ENCODE measurements at regions of chr5 and their contacts with region 1.

Region 1: GRCh38 chr5:79702606-79703382 is 13.2 kb downstream of the CMYA5 start:
- DNase-seq: peak; percentile 54
- ATAC-seq: peak; percentile 60
- H3K4me3 Mint-ChIP-seq: no peak overlapping the region
- H3K27ac Mint-ChIP-seq: no peak overlapping the region
- H3K4me1 Mint-ChIP-seq: peaks cover 12% of the 10 kb centered on the region
- H3K27me3 Mint-ChIP-seq: no peaks in the 10 kb centered on the region
- CTCF ChIP-seq: peak; percentile 76

Region 2: GRCh38 chr5:79602889-79603288 is 99.9 kb before region 1 on chr5:
- CTCF ChIA-PET with region 1: no interaction called
- POLR2A ChIA-PET with region 1: no interaction called
- intact Hi-C with region 1: no loop called
- DNase-seq: no peak
- ATAC-seq: no peak
- H3K4me3 Mint-ChIP-seq: no peak overlapping the region
- H3K27ac Mint-ChIP-seq: no peak overlapping the region
- H3K4me1 Mint-ChIP-seq: no peaks in the 10 kb centered on the region
- H3K27me3 Mint-ChIP-seq: peaks cover 13% of the 10 kb centered on the region
- CTCF ChIP-seq: no peak

Region 3: GRCh38 chr5:79666758-79667157 is 36.0 kb before region 1 on chr5:
- CTCF ChIA-PET with region 1: no interaction called
- POLR2A ChIA-PET with region 1: no interaction called
- intact Hi-C with region 1: no loop called
- DNase-seq: no peak
- ATAC-seq: no peak
- H3K4me3 Mint-ChIP-seq: no peak overlapping the region
- H3K27ac Mint-ChIP-seq: peak overlapping the region; percentile 13
- H3K4me1 Mint-ChIP-seq: peaks cover 15% of the 10 kb centered on the region
- H3K27me3 Mint-ChIP-seq: no peaks in the 10 kb centered on the region
- CTCF ChIP-seq: no peak

Region 4: DNA sequence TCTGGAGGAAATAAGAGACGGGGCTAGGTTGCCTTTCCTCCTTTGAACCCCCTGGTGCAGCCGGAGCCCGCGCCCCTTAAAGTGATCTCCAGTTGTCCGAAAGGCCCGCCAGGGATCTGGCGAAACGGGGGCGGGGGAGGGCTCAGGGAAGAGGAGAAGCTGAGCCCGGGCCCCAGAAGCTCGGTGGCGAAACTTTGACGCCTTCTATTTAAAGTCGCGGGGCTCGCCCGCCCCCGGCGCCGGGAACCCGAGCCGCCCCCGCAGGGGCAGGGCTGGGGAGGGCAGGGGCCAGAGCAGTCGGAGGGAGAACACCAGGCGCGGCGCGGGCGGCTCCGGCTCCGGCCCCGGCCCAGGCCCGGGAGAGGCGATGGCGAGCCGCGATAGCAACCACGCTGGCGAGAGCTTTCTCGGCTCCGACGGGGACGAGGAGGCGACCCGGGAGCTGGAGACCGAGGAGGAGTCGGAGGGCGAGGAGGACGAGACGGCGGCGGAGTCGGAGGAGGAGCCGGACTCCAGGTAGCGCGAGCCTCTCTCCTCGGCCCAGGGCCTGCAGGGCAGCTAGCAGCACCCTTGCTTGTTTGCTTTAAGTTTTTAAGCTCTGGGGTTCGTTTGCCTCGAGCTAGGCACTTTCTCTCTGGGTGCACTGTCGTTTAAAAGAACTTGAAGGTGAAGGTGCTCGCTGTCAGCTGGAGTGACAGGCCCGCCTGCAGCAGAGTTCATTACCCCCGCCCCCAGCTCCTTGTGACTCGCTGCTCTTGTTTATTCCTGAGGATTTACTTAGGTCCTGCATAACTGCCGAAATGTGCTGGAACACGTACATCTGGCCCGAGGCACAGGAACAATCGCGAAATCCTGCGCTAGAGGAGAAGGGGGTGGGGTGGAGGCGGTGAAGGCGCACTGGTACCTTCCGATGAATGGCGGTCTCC is 13.0 kb before region 1 on chr5 and contains the start of gene CMYA5:
- CTCF ChIA-PET with region 1: interaction called, 14 read pairs
- POLR2A ChIA-PET with region 1: no interaction called
- intact Hi-C with region 1: no loop called
- DNase-seq: no peak
- ATAC-seq: no peak
- H3K4me3 Mint-ChIP-seq: no peak within 1 kb of the TSS
- H3K27ac Mint-ChIP-seq: no peak within 1 kb of the TSS
- H3K4me1 Mint-ChIP-seq: peaks cover 11% of the 10 kb centered on the region
- H3K27me3 Mint-ChIP-seq: no peaks in the 10 kb centered on the region
- CTCF ChIP-seq: no peak
- total RNA-seq, gene CMYA5: 0.13 to 0.16 TPM

Region 5: DNA sequence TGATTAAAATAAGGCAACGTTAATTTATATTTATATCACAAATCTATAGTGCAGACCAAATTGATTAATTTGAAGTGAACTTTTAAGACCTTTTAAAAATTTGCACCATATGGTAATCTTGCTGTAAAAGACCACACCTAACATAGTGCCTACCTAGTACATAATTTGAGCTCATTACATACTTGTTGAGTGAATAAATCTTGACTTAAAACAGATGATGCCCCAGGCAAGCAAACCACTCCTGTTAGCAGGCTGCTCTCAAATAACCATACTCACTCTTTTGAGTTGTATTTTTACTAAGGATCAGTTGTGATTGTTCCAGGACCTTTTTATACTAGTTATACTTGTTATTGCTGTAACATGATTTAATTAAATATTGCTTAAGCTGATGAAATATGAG is 14.0 kb after region 1 on chr5:
- CTCF ChIA-PET with region 1: interaction called, 16 read pairs
- POLR2A ChIA-PET with region 1: no interaction called
- intact Hi-C with region 1: no loop called
- DNase-seq: no peak
- ATAC-seq: no peak
- H3K4me3 Mint-ChIP-seq: no peak overlapping the region
- H3K27ac Mint-ChIP-seq: no peak overlapping the region
- H3K4me1 Mint-ChIP-seq: no peaks in the 10 kb centered on the region
- H3K27me3 Mint-ChIP-seq: peaks cover 3% of the 10 kb centered on the region
- CTCF ChIP-seq: no peak

Region 6: GRCh38 chr5:79774171-79774854 is 71.5 kb after region 1 on chr5:
- CTCF ChIA-PET with region 1: no interaction called
- POLR2A ChIA-PET with region 1: no interaction called
- intact Hi-C with region 1: no loop called
- DNase-seq: peak; percentile 28
- ATAC-seq: peak; percentile 58
- H3K4me3 Mint-ChIP-seq: peak overlapping the region; percentile 43
- H3K27ac Mint-ChIP-seq: peak overlapping the region; percentile 66
- H3K4me1 Mint-ChIP-seq: peaks cover 18% of the 10 kb centered on the region
- H3K27me3 Mint-ChIP-seq: peaks cover 3% of the 10 kb centered on the region
- CTCF ChIP-seq: peak; percentile 46

Region 7: GRCh38 chr5:79857714-79858409 is 155.1 kb after region 1 on chr5:
- CTCF ChIA-PET with region 1: interaction called, 9 read pairs
- POLR2A ChIA-PET with region 1: interaction called, 3 read pairs
- intact Hi-C with region 1: loop called (anchors 2 kb)
- DNase-seq: peak; percentile 91
- ATAC-seq: peak; percentile 61
- H3K4me3 Mint-ChIP-seq: no peak overlapping the region
- H3K27ac Mint-ChIP-seq: peak overlapping the region; percentile 42
- H3K4me1 Mint-ChIP-seq: peaks cover 14% of the 10 kb centered on the region
- H3K27me3 Mint-ChIP-seq: peaks cover 9% of the 10 kb centered on the region
- CTCF ChIP-seq: peak; percentile 87